Right lobe of liver (tissue), 6 donors: ENCODE measurements at regions of chr3 and their contacts with region 1.

Region 1: DNA sequence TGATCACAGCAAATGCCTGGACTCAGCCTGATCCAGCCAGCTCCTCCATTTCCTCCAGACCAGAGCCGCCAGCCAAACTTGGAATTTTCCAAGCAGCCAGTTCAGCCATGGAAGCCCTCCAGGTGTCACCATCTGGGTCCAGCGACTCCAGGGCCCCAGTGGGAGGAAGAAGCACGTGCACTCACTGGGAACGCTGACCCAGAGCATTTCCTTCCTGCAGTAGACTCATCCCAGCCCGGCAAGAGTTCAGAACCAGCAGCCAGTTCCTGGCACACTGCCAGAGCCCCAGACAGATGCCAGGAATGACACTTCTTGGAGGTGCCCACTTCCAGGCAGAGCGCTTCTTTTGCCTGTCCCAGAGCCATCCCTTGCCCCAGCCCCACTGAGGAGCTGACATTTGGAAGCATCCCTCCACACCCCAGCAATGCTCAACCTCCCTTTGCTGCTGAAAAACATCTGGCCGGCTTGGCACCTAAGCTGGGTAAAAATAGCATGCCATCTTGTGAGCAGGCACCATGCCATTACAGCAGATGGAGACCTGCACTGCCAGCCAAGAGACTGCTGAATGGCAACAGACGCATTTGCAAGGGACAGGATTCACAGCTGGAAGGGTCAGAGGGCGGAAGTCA is 460.3 kb upstream of the PROK2 start:
- DNase-seq: peak in 1 of 3 donors; percentile 49
- ATAC-seq: peak; percentile 25 to 56 (median 40)
- H3K4me3 ChIP-seq: no peak overlapping the region
- H3K27ac ChIP-seq: no peak overlapping the region
- H3K4me1 ChIP-seq: peaks cover 0 to 1% (median 0%) of the 10 kb centered on the region in 4 donors
- H3K27me3 ChIP-seq: no peaks in the 10 kb centered on the region
- CTCF ChIP-seq: no peak
- POLR2A ChIP-seq: no peak

Region 2: DNA sequence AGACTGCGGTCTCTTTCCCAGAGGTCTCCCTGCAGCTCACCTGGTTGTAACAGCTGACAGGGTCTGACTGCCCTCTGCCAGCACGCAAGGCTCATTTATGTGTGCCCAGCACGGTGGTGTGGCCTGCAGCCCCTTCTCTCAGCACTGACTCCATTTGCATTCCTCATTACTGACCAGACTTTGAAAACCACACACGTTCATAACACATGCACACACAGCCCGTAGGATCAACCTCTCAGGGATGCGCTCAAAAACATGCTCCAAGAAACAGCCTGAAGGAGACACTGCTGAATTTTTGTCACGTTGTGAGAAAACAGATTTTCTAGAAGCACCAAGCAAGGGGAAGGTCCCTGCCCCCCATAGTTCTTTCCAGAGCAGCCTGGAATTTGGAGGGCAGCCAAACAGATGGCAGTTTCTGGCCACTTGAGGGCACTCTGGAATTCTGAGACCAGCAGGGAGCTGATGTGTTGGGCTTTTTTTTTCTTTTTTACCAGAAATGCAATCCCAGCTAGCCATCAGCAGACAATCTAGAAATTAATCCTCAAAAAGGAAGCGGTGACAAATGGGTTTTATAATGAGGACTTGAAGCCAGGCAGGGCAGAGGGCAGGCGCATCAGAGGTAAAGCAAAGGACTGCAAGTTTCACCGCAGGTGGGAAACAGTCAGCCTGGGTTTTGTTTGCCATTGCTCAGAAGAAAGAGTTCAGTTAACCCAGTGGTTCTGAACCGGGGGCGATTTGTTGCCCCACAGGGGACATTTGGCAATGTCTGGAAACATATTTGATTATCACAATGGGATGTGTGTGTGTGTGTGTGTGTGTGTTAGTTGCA is 289.8 kb before region 1 on chr3:
- intact Hi-C with region 1: loop called in 1 of 2 experiments (anchors 10 kb)
- DNase-seq: peak; percentile 70 to 80 (median 76)
- ATAC-seq: peak; percentile 84 to 95 (median 91)
- H3K4me3 ChIP-seq: no peak overlapping the region
- H3K27ac ChIP-seq: no peak overlapping the region
- H3K4me1 ChIP-seq: peaks cover 0 to 6% (median 2%) of the 10 kb centered on the region in 4 donors
- H3K27me3 ChIP-seq: no peaks in the 10 kb centered on the region
- CTCF ChIP-seq: peak; percentile 69 to 77 (median 75)
- POLR2A ChIP-seq: no peak

Region 3: DNA sequence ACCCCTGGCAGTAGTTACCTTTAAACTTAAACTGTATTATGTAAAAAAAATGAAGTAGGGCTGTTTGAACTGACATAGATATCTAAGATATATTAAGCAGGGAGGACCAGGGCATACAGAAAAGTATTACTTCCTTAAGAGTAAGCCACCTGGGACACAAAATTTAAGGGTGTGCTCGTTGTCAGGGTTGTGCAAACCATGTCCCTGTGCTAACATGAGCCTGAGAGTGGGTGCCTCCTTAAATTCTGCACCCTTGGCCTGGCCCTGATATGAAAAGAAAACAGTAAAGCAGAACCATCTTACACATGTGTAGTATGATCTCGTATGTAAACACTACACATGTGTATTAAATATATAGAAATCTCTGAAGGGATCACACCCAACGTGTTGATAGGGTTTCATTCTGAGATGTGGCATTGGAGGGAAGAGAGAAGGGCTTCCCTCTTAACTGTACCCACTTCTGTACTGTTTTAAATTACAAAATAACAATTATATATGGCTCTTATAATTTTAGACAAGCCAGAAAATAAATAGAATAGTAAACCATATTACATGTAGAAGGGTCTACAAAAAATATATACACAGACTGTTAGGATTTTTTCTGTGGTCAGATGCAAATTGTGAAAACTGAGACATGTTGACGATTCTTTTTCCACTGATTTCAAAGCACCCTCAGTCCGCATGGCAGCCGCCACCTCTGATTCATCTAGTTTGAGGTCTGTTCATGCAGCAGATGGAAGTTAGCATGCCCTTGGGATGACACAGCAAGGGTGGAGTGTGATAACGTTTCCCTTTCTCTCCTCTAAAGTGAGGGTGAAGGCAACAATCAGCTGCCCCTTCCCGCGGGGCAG is 59.5 kb before region 1 on chr3:
- intact Hi-C with region 1: no loop called
- DNase-seq: no peak
- ATAC-seq: no peak
- H3K4me3 ChIP-seq: no peak overlapping the region
- H3K27ac ChIP-seq: peak overlapping the region in 1 of 3 donors; percentile 42
- H3K4me1 ChIP-seq: peaks cover 0 to 23% (median 7%) of the 10 kb centered on the region in 4 donors
- H3K27me3 ChIP-seq: no peaks in the 10 kb centered on the region
- CTCF ChIP-seq: no peak
- POLR2A ChIP-seq: no peak

Region 4: DNA sequence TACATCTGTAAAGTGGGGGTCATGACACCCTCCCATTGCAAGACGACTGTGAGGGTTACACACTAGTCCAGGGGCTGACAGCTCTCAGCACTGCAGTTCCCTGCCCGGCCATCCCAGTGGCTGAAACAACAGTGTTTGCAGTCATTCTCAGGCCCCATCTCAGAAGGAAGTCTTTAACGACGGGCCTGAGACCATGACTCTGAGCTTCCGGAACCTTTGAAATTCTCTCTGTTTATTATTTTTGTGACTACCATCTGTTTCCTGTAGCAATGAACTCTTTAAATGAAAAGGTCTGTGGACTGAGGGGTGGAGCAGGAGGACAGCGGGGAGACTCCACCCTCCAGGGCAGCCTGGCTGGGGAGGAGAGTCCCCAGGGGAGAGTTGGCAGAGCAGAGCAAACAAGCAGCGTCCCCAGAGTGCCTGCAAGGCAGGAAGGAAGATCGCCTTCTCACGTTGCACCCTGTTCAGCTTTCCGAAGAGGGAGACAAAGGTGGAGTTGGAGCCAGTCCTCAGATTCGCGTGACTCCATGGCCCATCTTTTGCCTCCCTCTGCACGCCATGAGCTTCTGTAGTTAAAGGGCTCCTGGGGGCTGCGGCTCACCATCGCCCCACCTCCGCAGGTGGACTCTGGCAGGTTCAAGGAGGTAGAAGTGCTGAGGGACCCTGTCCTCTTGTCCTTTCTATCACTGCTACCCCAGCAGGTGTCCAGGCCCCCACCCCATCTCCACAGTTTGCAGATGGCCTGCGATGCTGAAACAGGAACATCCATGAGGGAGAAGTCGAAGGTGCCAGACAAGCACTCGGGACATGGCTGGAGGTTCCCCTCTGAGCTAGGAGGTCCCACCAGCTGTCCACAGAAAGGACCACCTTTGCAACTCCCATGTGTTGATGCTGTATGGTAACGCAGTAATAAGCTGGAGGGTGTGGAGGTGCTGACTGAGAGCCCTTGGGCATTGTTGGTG is 65.4 kb after region 1 on chr3:
- intact Hi-C with region 1: no loop called
- DNase-seq: peak; percentile 54 to 71 (median 58)
- ATAC-seq: peak; percentile 42 to 69 (median 58)
- H3K4me3 ChIP-seq: no peak overlapping the region
- H3K27ac ChIP-seq: peak overlapping the region in 2 of 3 donors; percentile 30 to 49
- H3K4me1 ChIP-seq: peaks cover 0 to 21% (median 8%) of the 10 kb centered on the region in 4 donors
- H3K27me3 ChIP-seq: no peaks in the 10 kb centered on the region
- CTCF ChIP-seq: no peak
- POLR2A ChIP-seq: no peak